Right ventricle myocardium inferior (tissue), 1 donor: ENCODE measurements at regions of chr9 and their contacts with region 1.

Region 1: DNA sequence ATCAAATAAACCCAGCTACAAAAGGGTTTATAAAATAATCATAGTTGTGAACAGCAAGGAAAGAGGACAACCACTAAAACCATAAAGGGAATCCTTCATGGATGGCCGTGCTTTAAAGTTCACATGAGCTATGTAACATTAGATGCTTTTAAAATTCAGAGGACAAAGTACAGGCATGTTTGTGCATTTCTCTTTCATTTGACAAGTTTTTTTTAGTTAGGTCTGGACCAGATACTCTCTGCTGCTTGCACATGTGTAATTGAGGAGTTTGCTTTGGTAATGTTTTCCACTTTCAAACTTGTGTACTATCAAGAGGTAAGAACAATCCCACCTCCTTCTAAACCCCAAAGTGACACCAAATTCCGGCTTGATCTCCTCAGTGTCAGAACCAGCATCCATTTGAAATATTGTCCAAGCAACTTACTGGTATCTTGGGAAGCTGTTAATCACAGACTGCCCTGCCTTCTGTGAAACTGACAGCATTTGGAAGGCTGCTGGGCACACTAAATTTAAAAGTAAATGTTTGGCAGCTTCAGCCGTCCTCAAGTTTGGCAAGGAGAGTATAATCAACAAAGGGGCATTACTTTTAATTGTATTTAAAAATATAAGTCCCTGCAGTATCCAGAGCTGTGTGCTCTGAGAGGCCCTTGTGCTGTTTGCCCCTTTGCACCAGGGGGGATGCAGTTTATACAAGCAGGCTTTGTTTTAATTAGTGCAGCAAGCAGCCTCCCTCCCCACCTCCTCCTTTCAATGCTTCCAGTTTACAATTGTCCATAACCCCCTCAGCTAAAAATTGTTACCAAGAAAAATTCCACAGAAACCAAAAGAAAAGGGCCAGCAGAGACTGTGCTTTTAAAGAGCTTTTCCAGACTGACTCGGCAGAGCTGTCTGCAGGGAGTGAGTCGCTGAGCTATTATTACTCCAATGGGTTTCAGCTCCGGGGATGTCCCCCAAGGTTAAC is 328.3 kb upstream of the MPDZ start:
- DNase-seq: no peak
- ATAC-seq: peak; percentile 82

Region 2: DNA sequence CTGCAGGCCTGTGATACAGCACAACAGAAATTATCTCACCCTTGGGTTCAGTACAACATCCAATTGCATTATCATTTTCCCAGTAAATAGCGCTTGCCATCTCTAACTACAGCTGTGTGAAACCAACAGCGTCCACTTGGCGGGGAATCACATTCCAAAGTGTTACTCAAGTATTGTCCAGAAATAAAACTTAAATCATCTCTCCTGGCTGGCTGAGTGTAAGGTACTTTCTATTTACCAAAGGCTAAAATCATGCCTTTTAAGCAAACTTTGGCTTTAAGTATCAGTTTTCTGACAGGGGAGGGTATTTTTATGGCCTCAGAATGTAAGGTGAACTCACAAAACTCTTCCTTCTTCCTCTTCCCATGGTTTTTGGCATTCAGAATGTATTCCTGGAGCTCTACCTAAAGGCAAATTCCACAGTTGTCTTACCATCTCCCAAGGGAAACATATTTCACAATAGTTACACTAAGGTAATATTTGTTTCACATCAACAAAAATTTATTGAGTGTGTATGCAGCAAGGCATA is 122.6 kb before region 1 on chr9:
- intact Hi-C with region 1: loop called (anchors 10 kb)
- DNase-seq: peak; percentile 64
- ATAC-seq: peak; percentile 97

Region 3: DNA sequence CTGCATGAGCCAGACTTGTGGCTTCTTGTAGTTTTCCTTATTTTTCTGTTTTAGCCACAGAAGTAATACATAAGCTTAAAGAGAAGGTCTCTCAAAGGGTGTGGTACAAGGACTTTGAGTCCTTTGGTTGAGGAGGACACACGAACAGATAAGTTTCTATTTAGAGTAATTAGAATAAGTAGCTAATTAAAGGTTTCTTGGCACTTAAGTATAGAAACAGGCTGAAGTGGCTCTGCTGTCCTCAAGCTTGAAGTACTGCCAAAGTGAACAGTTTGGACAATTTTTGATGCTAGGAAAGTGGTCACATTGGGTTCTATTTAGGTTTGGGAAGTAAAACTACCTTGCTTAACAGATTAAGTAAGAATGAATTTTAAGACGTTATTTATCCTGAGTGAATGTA is 50.0 kb before region 1 on chr9:
- intact Hi-C with region 1: no loop called
- DNase-seq: no peak
- ATAC-seq: peak; percentile 77

Region 4: DNA sequence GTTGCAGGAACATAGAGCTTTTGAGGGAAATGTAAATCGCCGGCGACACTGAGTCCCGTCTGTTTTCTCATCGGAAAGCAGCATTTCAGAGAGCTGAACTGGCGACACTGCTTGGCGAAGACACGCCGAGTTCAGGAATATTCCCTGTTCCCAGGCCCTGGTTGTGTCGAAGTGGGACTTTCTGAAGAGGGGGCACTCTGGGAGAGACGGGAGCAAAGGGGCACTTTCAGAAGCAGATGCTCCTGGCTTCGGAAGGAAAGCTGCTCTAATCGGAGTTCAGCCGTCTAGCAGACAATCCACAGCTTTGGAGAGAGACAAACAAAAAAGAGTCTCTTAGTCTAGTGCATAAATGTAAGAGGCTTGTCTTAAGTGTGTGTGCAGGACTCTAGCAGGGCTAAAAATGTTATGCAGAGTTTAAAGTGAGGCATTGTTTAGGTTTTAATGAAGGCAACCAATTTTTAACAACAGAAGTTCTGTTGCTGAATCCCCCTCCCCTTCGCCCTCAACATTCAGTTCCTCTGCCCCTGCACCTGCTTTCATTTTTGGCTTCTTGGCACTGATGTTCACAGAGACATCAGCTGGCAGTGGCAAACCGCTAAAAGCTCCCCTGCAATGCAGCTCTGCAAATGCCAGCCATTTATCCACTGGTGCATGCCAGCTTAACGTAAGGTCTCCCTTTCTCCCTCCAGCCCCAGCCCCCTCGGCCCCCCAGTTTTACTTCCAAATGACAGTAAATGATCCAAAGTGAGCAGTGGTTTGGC is 38.7 kb before region 1 on chr9:
- intact Hi-C with region 1: loop called (anchors 5 kb)
- DNase-seq: no peak
- ATAC-seq: no peak

Region 5: GRCh38 chr9:13651969-13652663 is 44.4 kb after region 1 on chr9:
- intact Hi-C with region 1: loop called (anchors 2 kb)
- DNase-seq: no peak
- ATAC-seq: peak; percentile 95

Region 6: DNA sequence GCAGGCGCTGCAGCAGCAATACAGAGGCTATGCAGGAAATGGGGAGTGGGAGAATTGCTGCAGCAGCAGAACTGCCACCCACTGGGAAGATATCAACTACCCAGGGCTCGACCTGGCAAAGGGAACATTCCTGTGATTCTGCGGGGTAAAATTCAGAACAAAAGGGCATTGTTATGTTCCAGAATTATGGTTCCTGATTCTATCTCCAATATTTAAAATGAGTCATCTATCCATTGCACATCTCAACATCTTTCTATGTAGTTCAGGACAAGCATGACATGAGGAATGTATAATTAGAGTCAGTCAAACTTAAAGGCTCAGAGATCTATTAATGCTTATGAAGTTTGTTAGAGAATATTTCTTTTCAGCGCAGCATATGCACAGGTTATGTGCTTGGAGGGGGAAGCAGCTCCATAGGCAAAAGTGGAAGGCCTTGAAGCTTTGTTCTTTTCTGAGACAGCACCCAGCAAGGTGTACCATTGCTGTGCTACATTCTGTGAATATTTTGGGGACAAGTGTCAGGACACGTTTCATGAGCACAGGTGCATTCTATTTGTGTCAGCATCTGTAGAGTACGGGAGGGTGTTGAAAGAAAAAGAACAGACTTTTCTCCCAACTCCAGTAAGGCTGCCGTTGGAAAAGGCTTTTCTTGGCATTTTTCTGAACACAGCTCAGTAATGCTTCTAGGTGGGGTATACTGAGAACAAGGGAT is 67.3 kb after region 1 on chr9:
- intact Hi-C with region 1: loop called (anchors 5 kb)
- DNase-seq: no peak
- ATAC-seq: peak; percentile 54

Region 7: GRCh38 chr9:13787234-13787833 is 179.6 kb after region 1 on chr9:
- intact Hi-C with region 1: loop called (anchors 5 kb)
- DNase-seq: no peak
- ATAC-seq: peak; percentile 82